PC-9 (cell line): ENCODE measurements at regions of chr2 and their contacts with region 1.

Region 1: DNA sequence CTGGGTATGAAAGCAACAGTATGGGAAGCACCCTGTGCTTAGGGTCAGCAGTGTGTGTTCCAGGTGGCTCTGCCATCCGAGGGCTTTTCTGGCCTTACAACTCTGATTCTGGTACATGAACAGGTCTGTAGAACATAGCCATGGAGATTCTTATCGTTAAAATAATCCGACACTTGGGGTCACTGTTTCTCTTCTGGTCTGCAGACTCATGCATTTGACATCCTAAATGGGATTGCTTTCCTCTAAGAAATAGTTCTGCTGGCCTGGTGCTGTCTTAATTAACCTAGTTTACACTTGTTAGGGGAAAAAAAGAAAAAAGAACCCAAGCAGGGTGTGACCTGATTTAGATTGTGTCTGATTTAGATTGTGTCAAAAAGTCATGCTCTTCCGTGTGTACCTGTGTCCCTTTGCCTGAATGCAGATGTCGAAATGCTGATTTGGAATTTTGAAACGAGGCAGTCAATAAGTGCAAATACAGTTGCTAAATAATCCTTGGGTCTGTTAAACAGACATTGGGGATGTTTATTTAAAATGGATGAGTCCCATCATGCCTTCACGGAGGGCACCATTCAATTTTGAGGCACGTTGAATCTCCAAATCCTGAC is 59.6 kb downstream of the TRPM8 start:
- DNase-seq: peak; percentile 56 to 94
- H3K4me3 ChIP-seq: no peak overlapping the region
- H3K27ac ChIP-seq: peak overlapping the region; percentile 55
- H3K4me1 ChIP-seq: peaks cover 69% of the 10 kb centered on the region
- H3K27me3 ChIP-seq: no peaks in the 10 kb centered on the region
- CTCF ChIP-seq: peak; percentile 88

Region 2: GRCh38 chr2:233426619-233427342 is 550.0 kb before region 1 on chr2:
- CTCF ChIA-PET with region 1: no interaction called
- POLR2A ChIA-PET with region 1: no interaction called
- intact Hi-C with region 1: no loop called
- DNase-seq: peak; percentile 37 to 95
- H3K4me3 ChIP-seq: 0 out of 2 replicates have a peak overlapping the region, but pooled peaks have one; percentile 3
- H3K27ac ChIP-seq: peak overlapping the region; percentile 64
- H3K4me1 ChIP-seq: peaks cover 58% of the 10 kb centered on the region
- H3K27me3 ChIP-seq: no peaks in the 10 kb centered on the region
- CTCF ChIP-seq: no peak

Region 3: GRCh38 chr2:233775414-233775813 is 201.4 kb before region 1 on chr2:
- CTCF ChIA-PET with region 1: no interaction called
- POLR2A ChIA-PET with region 1: no interaction called
- intact Hi-C with region 1: no loop called
- DNase-seq: peak in 1 of 2 experiments; percentile 43
- H3K4me3 ChIP-seq: no peak overlapping the region
- H3K27ac ChIP-seq: no peak overlapping the region
- H3K4me1 ChIP-seq: no peaks in the 10 kb centered on the region
- H3K27me3 ChIP-seq: no peaks in the 10 kb centered on the region
- CTCF ChIP-seq: no peak

Region 4: GRCh38 chr2:234091432-234091879 is 114.7 kb after region 1 on chr2:
- CTCF ChIA-PET with region 1: interaction called, 3 read pairs
- POLR2A ChIA-PET with region 1: no interaction called
- intact Hi-C with region 1: loop called (anchors 5 kb)
- DNase-seq: peak; percentile 51 to 74
- H3K4me3 ChIP-seq: no peak overlapping the region
- H3K27ac ChIP-seq: peak overlapping the region; percentile 10; the same call in 1 of the 2 replicates
- H3K4me1 ChIP-seq: peaks cover 17% of the 10 kb centered on the region
- H3K27me3 ChIP-seq: no peaks in the 10 kb centered on the region
- CTCF ChIP-seq: no peak

Region 5: GRCh38 chr2:234257856-234258561 is 281.2 kb after region 1 on chr2:
- CTCF ChIA-PET with region 1: no interaction called
- POLR2A ChIA-PET with region 1: no interaction called
- intact Hi-C with region 1: loop called (anchors 1 kb)
- DNase-seq: peak; percentile 92 to 98
- H3K4me3 ChIP-seq: peak overlapping the region; percentile 19; the same call in 1 of the 2 replicates
- H3K27ac ChIP-seq: peak overlapping the region; percentile 88
- H3K4me1 ChIP-seq: peaks cover 61% of the 10 kb centered on the region
- H3K27me3 ChIP-seq: no peaks in the 10 kb centered on the region
- CTCF ChIP-seq: peak; percentile 85

Region 6: DNA sequence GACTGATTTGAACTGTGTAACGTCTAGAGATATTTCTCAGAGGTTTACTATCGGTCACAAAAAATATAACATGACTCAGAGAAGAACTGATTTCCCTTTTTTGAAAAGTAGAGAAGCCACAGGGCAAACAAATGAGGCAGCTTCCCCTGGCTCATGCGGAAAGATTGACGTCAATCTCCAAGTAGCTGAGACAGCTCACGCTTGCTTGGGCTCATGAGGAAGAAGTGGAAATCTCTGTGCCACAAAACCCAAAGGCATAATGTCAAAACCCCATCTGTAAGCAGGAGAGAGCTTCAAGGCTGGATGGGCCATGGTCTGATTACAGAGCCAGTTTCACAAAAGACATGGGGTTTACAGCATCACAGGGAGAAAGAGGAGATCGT is 332.0 kb after region 1 on chr2:
- CTCF ChIA-PET with region 1: no interaction called
- POLR2A ChIA-PET with region 1: no interaction called
- intact Hi-C with region 1: no loop called
- DNase-seq: peak in 1 of 2 experiments; percentile 24
- H3K4me3 ChIP-seq: no peak overlapping the region
- H3K27ac ChIP-seq: no peak overlapping the region
- H3K4me1 ChIP-seq: peaks cover 26% of the 10 kb centered on the region
- H3K27me3 ChIP-seq: no peaks in the 10 kb centered on the region
- CTCF ChIP-seq: no peak

Region 7: GRCh38 chr2:234500394-234501006 is 523.7 kb after region 1 on chr2:
- CTCF ChIA-PET with region 1: interaction called, 3 read pairs
- POLR2A ChIA-PET with region 1: interaction called, 15 read pairs
- intact Hi-C with region 1: loop called (anchors 1 kb)
- DNase-seq: peak; percentile 46 to 57
- H3K4me3 ChIP-seq: no peak overlapping the region
- H3K27ac ChIP-seq: no peak overlapping the region
- H3K4me1 ChIP-seq: peaks cover 17% of the 10 kb centered on the region
- H3K27me3 ChIP-seq: no peaks in the 10 kb centered on the region
- CTCF ChIP-seq: peak; percentile 70

Region 8: GRCh38 chr2:234951664-234952269 is 975.0 kb after region 1 on chr2 and contains the start of gene SH3BP4:
- CTCF ChIA-PET with region 1: no interaction called
- POLR2A ChIA-PET with region 1: no interaction called
- intact Hi-C with region 1: loop called (anchors 10 kb)
- DNase-seq: peak; percentile 54 to 91
- H3K4me3 ChIP-seq: peak within 1 kb of the TSS; percentile 97
- H3K27ac ChIP-seq: peak within 1 kb of the TSS; percentile 53
- H3K4me1 ChIP-seq: peaks cover 38% of the 10 kb centered on the region
- H3K27me3 ChIP-seq: no peaks in the 10 kb centered on the region
- CTCF ChIP-seq: no peak
- total RNA-seq, gene SH3BP4: 131 and 135 TPM in 2 replicates

Region 9: DNA sequence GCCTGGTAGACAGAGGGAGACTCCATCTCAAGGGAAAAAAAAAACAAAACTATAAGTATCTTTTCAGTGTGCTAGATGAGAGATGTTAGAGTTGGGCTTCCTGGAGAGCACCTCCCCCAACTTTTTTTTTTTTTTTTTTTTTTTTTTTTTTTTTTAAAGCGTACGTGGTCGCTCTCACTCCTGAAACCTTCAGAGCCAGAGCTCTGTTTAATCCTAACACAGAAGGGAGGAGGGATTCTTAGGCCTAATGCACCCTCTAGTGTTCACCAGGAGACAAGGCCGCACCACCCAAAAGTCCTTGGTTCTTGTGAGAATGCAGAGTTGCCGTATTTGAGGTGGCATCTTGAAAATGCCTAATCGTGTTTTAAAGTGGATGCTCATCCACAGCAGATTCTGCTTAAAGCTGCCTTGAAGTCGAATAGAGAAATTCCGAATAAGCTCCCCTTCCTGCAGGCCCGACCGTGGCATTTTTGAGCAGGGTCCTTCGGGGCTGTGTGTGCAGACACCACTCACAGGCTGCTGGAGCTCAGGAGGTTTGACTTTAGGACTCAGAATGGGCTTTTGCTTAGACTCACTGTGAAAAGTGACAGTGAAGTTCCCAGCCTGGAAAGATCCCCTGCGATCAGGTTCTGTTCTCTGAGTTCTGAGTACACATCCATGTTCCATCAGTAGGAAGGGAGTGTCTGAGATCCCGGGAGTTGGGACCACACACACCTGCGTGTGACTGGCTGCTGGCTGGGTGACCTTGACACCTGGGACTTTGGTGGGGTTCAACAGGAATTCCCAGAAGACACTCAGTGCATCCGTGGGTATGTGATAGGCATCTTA is 1769.7 kb after region 1 on chr2:
- CTCF ChIA-PET with region 1: no interaction called
- POLR2A ChIA-PET with region 1: no interaction called
- intact Hi-C with region 1: loop called (anchors 10 kb)
- DNase-seq: peak; percentile 80 to 87
- H3K4me3 ChIP-seq: no peak overlapping the region
- H3K27ac ChIP-seq: no peak overlapping the region
- H3K4me1 ChIP-seq: peaks cover 15% of the 10 kb centered on the region
- H3K27me3 ChIP-seq: no peaks in the 10 kb centered on the region
- CTCF ChIP-seq: peak; percentile 95